ENCODE measurements at regions of chr7 and their contacts with region 1.

Region 1: GRCh38 chr7:26365077-26365900 is 73.6 kb downstream of the SNX10 start:
- DNase-seq: peak; percentile 81
- H3K4me3 ChIP-seq: no peak overlapping the region
- H3K27ac ChIP-seq: no peak overlapping the region
- H3K4me1 ChIP-seq: peaks cover 2% of the 10 kb centered on the region
- H3K27me3 ChIP-seq: peaks cover 10% of the 10 kb centered on the region
- CTCF ChIP-seq: peak; percentile 72

Region 2: GRCh38 chr7:25259587-25260243 is 1105.6 kb before region 1 on chr7:
- CTCF ChIA-PET with region 1: no interaction called
- POLR2A ChIA-PET with region 1: no interaction called
- intact Hi-C with region 1: loop called (anchors 10 kb)
- DNase-seq: peak; percentile 88
- H3K4me3 ChIP-seq: no peak overlapping the region
- H3K27ac ChIP-seq: no peak overlapping the region
- H3K4me1 ChIP-seq: peaks cover 22% of the 10 kb centered on the region
- H3K27me3 ChIP-seq: peaks cover 9% of the 10 kb centered on the region
- CTCF ChIP-seq: peak; percentile 90

Region 3: DNA sequence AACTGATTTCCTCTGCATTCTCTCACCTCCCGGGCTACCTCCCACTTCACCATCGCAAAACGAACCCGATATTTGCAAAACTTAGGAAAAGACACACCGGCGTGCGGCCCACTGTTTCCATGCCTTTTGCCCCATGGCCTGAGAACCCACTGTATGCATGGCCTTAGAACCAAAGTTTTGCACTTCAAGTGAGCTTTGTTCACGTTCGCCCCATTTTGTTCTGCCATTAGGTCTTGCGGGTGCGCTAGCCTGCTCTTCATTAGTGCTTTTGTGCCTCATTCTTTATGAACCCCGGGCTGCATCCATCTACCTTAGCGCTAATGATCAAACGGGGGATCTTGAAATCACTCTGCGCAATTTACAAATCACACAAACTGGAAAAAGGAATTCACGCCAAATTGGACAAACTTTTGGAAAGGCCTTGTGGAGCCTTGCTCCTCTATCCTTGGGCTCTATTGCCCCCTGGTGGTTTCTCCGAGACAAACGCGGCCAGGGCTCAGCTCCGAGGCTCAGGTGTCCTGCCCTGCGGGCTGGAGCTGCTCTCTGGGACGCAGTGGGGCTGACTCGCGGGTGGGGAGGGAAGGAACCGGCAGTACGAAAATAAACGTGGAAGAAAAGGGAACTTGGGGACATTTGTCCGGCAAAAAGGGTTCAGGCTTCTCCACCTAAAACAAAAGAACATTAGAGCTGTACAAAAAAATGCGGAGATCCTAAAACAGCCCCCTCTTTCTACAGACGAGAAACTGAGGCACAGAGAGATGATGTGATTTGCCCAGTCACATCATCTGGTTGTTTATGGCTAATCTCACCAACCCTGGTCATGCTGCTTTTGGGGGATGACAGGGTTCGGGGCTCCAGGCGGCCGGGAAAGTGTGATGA is 513.7 kb before region 1 on chr7:
- CTCF ChIA-PET with region 1: interaction called, 4 read pairs
- POLR2A ChIA-PET with region 1: no interaction called
- intact Hi-C with region 1: loop called (anchors 10 kb)
- DNase-seq: peak; percentile 87
- H3K4me3 ChIP-seq: peak overlapping the region; percentile 20
- H3K27ac ChIP-seq: no peak overlapping the region
- H3K4me1 ChIP-seq: peaks cover 6% of the 10 kb centered on the region
- H3K27me3 ChIP-seq: peaks cover 16% of the 10 kb centered on the region
- CTCF ChIP-seq: peak; percentile 92

Region 4: GRCh38 chr7:26090927-26091519 is 274.3 kb before region 1 on chr7:
- CTCF ChIA-PET with region 1: interaction called, 12 read pairs
- POLR2A ChIA-PET with region 1: no interaction called
- intact Hi-C with region 1: loop called (anchors 2 kb)
- DNase-seq: peak; percentile 86
- H3K4me3 ChIP-seq: peak overlapping the region; percentile 31
- H3K27ac ChIP-seq: peak overlapping the region; percentile 31
- H3K4me1 ChIP-seq: peaks cover 10% of the 10 kb centered on the region
- H3K27me3 ChIP-seq: no peaks in the 10 kb centered on the region
- CTCF ChIP-seq: peak; percentile 84

Region 5: DNA sequence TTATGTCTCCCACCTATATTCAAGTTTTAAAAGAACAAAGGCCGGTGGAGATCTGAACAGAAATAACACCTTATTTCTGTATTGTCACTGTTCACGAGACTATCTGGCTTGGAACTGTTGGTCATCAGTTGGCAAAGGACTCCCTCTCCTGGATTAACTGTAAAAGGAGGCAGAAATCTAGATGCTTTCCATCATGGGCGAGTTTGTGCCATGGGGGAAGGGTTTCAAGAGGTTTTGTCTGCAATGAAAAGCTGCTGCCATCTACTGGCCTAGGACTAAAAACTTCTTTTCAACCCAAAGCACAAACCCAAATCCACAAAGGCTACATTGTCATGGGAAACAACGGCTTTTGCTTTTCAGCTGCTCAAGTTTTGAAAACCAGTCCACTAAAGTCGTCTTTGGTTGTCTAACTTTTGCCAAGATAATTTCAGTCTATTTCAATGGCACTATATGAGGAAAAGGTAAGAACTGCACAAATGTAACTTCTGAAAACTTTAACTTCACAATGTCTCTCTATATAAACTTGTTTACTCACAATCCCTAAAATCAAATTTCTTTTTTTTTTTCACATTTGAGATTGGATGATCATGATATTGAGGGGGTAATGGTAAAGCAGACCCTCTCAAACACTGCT is 302.3 kb after region 1 on chr7:
- CTCF ChIA-PET with region 1: interaction called, 21 read pairs
- POLR2A ChIA-PET with region 1: no interaction called
- intact Hi-C with region 1: loop called (anchors 1 kb)
- DNase-seq: peak; percentile 95
- H3K4me3 ChIP-seq: no peak overlapping the region
- H3K27ac ChIP-seq: no peak overlapping the region
- H3K4me1 ChIP-seq: no peaks in the 10 kb centered on the region
- H3K27me3 ChIP-seq: peaks cover 80% of the 10 kb centered on the region
- CTCF ChIP-seq: peak; percentile 93

Region 6: DNA sequence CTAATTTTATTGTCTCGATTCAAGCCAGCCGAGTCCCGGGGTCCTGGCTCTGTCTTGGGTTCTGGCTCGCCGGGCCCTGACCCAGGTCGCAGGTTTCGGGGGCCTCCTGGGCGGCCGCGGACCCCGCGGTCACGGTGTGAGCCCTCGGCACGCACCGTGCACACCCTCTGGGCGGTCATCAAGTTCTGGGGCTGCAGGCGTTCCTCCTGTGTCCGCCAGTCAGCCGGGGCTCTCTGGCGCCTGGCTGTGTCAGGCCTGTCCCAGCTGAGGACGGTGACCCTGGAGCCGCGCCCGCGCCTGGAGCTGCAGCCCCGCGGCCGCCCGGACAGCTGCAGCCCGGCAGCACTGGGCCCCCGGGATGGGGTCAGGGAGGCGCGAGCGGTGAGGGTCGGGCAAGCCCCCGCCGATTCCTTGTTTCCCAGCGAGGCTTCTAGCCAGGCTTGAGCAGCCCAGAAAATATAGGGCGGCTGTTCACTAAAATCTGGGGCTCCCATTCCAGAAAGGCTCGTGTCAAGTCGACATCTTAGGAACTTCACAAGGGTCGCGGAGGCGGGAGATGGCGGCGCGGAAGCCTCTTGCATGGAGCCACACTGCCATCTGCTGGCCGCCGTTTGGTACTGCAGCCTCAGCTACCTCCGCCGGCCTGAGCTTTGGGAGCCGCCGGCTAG is 795.4 kb after region 1 on chr7:
- CTCF ChIA-PET with region 1: interaction called, 14 read pairs
- POLR2A ChIA-PET with region 1: no interaction called
- intact Hi-C with region 1: loop called (anchors 5 kb)
- DNase-seq: peak; percentile 87
- H3K4me3 ChIP-seq: peak overlapping the region; percentile 50
- H3K27ac ChIP-seq: no peak overlapping the region
- H3K4me1 ChIP-seq: peaks cover 4% of the 10 kb centered on the region
- H3K27me3 ChIP-seq: peaks cover 61% of the 10 kb centered on the region
- CTCF ChIP-seq: peak; percentile 96

Measured in A673 (cell line).